Activated CD8-positive, alpha-beta memory T cell treated with anti-CD3 and anti-CD28 coated beads, Interleukin-2, amount 10 ng/mL, durations not matched to agents 7 days and 5 days (primary cell): ENCODE measurements at regions of chr6 and their contacts with region 1.

Region 1: DNA sequence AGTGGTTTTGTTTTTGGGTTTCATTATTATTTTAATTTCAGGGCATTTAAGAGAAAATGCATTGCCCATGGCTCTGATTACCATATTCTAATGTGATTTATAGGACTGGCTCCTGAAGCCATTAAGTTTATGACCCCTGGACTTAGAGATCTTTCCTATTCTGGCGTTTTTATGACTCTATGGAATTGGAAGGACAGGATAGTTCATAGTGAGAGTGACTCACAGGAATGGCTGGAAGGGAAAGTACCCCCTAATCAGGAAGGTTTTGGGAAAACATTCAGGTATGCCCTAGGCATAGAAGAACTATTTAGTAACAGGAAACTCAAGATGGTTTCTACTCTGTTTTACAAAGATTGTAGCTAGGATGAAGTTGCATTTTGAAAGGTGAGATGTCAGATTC is 108.6 kb upstream of the SLC2A12 start:
- DNase-seq: no peak
- ATAC-seq: no peak
- H3K4me3 Mint-ChIP-seq: no peak overlapping the region
- H3K27ac Mint-ChIP-seq: no peak overlapping the region
- H3K4me1 Mint-ChIP-seq: no peaks in the 10 kb centered on the region
- H3K27me3 Mint-ChIP-seq: no peaks in the 10 kb centered on the region

Region 2: GRCh38 chr6:133871131-133871530 is 289.9 kb before region 1 on chr6:
- CTCF ChIA-PET with region 1: no interaction called
- DNase-seq: no peak
- ATAC-seq: no peak
- H3K4me3 Mint-ChIP-seq: no peak overlapping the region
- H3K27ac Mint-ChIP-seq: no peak overlapping the region
- H3K4me1 Mint-ChIP-seq: no peaks in the 10 kb centered on the region
- H3K27me3 Mint-ChIP-seq: peaks cover 16% of the 10 kb centered on the region

Region 3: GRCh38 chr6:134822920-134823709 is 662.1 kb after region 1 on chr6:
- CTCF ChIA-PET with region 1: interaction called, 15 read pairs
- DNase-seq: peak; percentile 51
- ATAC-seq: peak; percentile 68
- H3K4me3 Mint-ChIP-seq: no peak overlapping the region
- H3K27ac Mint-ChIP-seq: no peak overlapping the region
- H3K4me1 Mint-ChIP-seq: no peaks in the 10 kb centered on the region
- H3K27me3 Mint-ChIP-seq: peaks cover 10% of the 10 kb centered on the region